PC-9 (cell line): ENCODE measurements at regions of chr3 and their contacts with region 1.

Region 1: DNA sequence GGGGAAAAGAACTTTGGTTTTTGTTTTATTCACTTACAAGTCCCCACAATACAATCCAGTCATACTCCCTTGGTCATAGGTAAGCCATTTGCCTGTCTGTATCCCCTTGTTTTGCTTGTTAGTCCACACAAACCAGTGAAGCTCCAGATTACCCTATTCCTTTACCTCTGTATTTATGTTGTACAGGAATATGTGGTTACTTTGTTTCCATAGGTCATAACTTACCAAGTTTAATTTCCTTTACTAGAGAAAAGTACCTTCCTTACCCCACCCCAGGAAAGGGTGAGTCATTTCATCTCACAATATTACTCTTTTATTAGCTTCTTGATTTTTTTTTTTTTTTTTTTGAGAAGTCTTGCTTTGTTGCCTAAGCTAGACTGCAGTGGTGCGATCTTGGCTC is 113.4 kb upstream of the LRRFIP2 start:
- DNase-seq: no peak
- H3K4me3 ChIP-seq: no peak overlapping the region
- H3K27ac ChIP-seq: 0 out of 2 replicates have a peak overlapping the region, but pooled peaks have one; percentile 6
- H3K4me1 ChIP-seq: no peaks in the 10 kb centered on the region; the same call in 1 of the 2 replicates
- H3K27me3 ChIP-seq: no peaks in the 10 kb centered on the region
- CTCF ChIP-seq: no peak

Region 2: DNA sequence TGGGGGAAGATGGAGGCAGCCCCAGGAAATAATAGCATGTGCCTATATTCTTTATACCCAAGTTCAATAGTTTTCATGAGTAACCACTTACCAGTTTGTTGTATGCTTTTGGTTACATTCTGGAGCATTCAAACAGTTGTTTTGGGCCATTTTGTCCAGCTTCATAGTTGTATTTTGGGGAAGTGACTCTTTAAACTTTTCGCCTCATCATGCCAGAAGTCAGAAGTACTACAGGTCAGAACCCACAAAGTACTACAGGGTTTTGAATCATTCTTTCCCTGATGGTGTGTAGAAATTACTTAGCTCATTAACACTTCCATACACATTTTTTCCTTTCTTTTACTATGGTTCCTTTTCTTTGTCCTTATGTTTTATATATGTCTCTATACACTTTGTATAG is 1437.8 kb before region 1 on chr3:
- CTCF ChIA-PET with region 1: no interaction called
- POLR2A ChIA-PET with region 1: interaction called, 14 read pairs
- intact Hi-C with region 1: no loop called
- DNase-seq: no peak
- H3K4me3 ChIP-seq: no peak overlapping the region
- H3K27ac ChIP-seq: no peak overlapping the region
- H3K4me1 ChIP-seq: no peaks in the 10 kb centered on the region
- H3K27me3 ChIP-seq: no peaks in the 10 kb centered on the region
- CTCF ChIP-seq: no peak

Region 3: GRCh38 chr3:37243820-37244748 is 43.7 kb before region 1 on chr3:
- CTCF ChIA-PET with region 1: no interaction called
- POLR2A ChIA-PET with region 1: interaction called, 13 read pairs
- intact Hi-C with region 1: no loop called
- DNase-seq: peak; percentile 77 to 84
- H3K4me3 ChIP-seq: peak overlapping the region; percentile 80
- H3K27ac ChIP-seq: peak overlapping the region; percentile 80
- H3K4me1 ChIP-seq: peaks cover 37% of the 10 kb centered on the region
- H3K27me3 ChIP-seq: no peaks in the 10 kb centered on the region
- CTCF ChIP-seq: no peak

Region 4: GRCh38 chr3:37308247-37308646 is 20.5 kb after region 1 on chr3:
- CTCF ChIA-PET with region 1: interaction called, 11 read pairs
- POLR2A ChIA-PET with region 1: no interaction called
- intact Hi-C with region 1: no loop called
- DNase-seq: no peak
- H3K4me3 ChIP-seq: no peak overlapping the region
- H3K27ac ChIP-seq: no peak overlapping the region
- H3K4me1 ChIP-seq: no peaks in the 10 kb centered on the region
- H3K27me3 ChIP-seq: no peaks in the 10 kb centered on the region
- CTCF ChIP-seq: peak; percentile 52; the same call in 1 of the 2 replicates

Region 5: GRCh38 chr3:37770336-37770735 is 482.6 kb after region 1 on chr3:
- CTCF ChIA-PET with region 1: no interaction called
- POLR2A ChIA-PET with region 1: interaction called, 25 read pairs
- intact Hi-C with region 1: no loop called
- DNase-seq: no peak
- H3K4me3 ChIP-seq: no peak overlapping the region
- H3K27ac ChIP-seq: no peak overlapping the region
- H3K4me1 ChIP-seq: no peaks in the 10 kb centered on the region
- H3K27me3 ChIP-seq: peaks cover 76% of the 10 kb centered on the region
- CTCF ChIP-seq: no peak